Uterus (tissue), 4 donors: ENCODE measurements at regions of chr22 and their contacts with region 1.

Region 1: GRCh38 chr22:49564666-49565515 is 262.8 kb downstream of the BRD1 start:
- DNase-seq: peak in 1 of 2 donors; percentile 1
- H3K4me3 ChIP-seq: no peak overlapping the region
- H3K27ac ChIP-seq: no peak overlapping the region
- H3K4me1 ChIP-seq: no peaks in the 10 kb centered on the region
- H3K27me3 ChIP-seq: no peaks in the 10 kb centered on the region
- CTCF ChIP-seq: no peak
- POLR2A ChIP-seq: no peak

Region 2: DNA sequence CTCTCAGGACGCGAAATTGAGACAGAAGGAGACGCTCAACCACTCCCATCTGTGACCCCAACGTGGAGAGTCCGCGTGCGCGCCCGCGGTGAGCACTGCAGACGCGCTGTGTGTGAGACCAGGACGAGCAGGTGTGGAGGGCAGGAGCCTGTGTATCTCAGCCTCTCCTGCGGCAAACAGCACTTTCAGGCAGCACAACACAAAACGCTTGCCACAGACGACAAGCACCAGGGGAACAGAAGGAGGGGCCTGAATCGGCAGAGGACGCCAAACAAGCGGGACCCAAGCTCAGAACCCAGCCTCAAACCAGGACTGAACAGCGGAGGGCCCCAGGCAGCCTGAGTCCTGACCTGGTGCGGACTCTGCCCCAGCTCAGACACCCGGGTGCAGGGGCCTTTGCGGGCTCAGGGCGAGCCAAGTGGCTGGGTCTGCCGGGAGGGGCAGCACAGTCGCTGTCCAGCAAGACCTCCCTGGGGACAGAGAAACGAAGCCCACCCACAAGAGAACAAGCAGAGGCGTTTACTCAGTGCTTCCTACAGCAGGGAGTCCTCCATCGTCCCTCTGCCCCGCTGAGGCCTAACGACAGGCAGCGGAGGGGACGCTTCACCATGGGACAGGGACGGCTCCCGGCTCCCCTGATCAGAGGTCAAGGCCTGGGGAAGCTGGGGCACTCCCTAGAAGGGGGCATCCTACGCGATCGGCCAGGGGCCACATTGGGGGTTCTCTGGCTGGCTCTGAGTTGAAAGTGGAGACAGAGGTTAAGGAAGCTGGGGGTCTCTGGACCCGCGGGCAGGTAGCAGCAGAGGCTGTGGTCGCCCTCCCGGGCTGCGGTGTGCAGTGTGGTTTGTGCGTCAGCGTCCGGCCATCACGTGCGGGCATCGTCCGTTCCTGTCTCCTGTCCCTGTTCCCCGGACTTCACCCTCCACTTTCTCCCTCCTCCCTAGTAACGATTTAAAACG is 298.1 kb before region 1 on chr22:
- intact Hi-C with region 1: no loop called
- DNase-seq: no peak
- H3K4me3 ChIP-seq: no peak overlapping the region
- H3K27ac ChIP-seq: no peak overlapping the region
- H3K4me1 ChIP-seq: no peaks in the 10 kb centered on the region
- H3K27me3 ChIP-seq: no peaks in the 10 kb centered on the region
- CTCF ChIP-seq: no peak
- POLR2A ChIP-seq: no peak

Region 3: DNA sequence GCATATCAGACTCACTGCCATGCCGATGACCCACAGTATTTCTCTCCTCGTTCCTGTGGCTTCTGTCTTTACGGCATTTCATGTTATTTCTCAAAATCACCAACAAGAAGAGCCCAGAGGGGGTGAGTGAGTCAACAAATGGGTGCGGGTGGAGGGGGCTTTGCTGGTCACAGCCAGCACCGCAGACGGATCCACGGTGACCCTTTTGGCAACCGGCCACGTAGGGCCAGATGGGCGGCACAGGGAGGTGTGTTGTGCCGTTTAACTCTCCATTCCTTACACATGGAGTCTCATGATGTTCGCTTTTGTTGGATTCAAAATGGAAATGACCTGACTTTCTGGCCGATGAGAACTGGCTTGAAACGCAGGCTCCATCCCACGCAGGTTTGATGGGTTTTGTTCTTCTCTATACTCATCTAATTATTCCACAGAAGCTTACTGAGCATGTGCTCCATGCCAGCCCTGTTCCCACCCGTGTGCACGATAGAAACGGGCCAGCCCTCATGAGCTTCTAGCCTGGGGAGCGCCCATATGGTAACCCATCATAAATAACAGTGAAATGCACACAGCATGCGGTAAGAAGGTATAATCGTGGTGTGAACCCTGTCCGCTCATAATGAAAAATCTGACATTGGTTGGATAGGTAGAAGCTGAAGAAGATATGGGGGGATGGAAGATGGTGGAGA is 57.1 kb before region 1 on chr22:
- intact Hi-C with region 1: loop called (anchors 5 kb)
- DNase-seq: no peak
- H3K4me3 ChIP-seq: no peak overlapping the region
- H3K27ac ChIP-seq: no peak overlapping the region
- H3K4me1 ChIP-seq: no peaks in the 10 kb centered on the region
- H3K27me3 ChIP-seq: no peaks in the 10 kb centered on the region
- CTCF ChIP-seq: no peak
- POLR2A ChIP-seq: no peak

Region 4: GRCh38 chr22:49614966-49615965 is 50.4 kb after region 1 on chr22:
- intact Hi-C with region 1: loop called (anchors 5 kb)
- DNase-seq: no peak
- H3K4me3 ChIP-seq: no peak overlapping the region
- H3K27ac ChIP-seq: no peak overlapping the region
- H3K4me1 ChIP-seq: no peaks in the 10 kb centered on the region
- H3K27me3 ChIP-seq: no peaks in the 10 kb centered on the region
- CTCF ChIP-seq: no peak
- POLR2A ChIP-seq: no peak